Motor neuron (in vitro differentiated cells): ENCODE measurements at regions of chr20 and their contacts with region 1.

Region 1: DNA sequence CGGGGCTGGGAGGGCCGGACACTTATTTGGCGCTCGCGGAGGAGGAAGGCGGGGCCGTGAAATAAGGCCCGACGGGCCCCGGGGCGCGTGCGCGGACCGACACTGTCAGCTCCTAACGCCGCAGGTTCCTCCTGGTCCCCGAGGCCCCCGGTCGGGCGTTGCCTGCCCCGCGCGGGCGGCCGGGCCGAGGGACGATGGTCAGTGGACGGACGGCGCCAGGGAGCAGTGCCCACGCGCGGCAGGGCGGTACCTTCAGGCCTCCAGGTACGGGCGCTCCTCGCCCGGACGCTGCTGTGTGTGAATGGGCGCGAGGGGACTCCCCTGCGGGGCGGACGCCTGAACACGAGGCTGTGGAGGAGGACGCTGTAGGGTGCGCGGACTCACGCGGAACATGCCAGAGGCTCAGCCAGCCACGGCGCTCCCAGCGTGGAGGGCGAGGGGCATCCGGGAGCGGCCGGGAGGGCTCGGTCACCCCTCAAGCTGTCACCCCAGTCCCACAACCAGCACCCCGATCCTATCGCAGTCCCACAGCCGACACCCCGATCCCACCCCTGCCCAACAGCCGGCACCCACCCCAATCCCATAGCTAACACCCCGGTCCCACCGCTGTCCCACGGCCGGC is 339 bp upstream of the GMEB2 start:
- ATAC-seq: peak; percentile 64 to 90 (median 87)
- H3K4me3 ChIP-seq: peak overlapping the region; percentile 81 to 95 (median 89)
- H3K27ac ChIP-seq: peak overlapping the region; percentile 99
- H3K4me1 ChIP-seq: peaks cover 10 to 22% of the 10 kb centered on the region in 2 donors

Region 2: GRCh38 chr20:63434599-63435378 is 192.5 kb before region 1 on chr20:
- in situ Hi-C with region 1: loop called in 1 of 9 experiments (anchors 25 kb)
- ATAC-seq: peak; percentile 18 to 76 (median 44)
- H3K4me3 ChIP-seq: no peak overlapping the region
- H3K27ac ChIP-seq: no peak overlapping the region
- H3K4me1 ChIP-seq: peaks cover 0 to 6% of the 10 kb centered on the region in 2 donors

Region 3: DNA sequence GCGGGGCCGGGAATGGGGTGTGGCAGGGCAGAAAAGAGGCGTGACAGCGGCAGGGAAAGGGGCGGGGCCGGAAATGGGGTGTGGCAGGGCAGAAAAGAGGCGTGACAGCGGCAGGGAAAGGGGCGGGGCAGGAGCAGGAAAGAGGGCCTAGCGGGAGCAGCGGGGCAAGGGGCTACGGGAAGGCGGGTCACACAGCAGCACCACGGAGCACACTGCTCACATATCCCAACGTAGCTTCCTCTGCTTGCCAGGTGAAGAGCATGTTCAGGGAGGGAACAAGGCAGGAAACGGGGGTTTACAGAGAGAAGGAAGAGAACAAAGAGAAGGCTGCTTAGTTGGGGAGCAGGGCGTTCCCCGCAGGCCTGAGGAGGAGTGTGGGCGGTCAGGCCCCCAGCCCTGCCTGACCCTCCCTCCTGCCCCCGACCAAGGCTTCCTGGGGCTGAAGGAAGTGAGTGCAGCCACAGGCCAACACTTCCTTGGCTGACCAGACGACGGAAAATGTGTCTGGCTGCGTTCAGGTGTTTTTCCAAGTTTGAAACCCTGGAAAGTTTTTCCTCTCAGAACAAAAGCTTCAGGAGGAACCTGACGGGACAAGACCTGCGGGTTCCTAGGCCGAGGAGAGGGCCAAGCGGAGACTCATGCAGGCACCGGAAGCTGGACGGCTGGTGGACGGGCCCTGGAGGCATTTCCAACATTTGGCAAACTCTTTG is 315.2 kb after region 1 on chr20:
- in situ Hi-C with region 1: no loop called
- ATAC-seq: peak in 5 of 8 experiments; percentile 26 to 60 (median 54)
- H3K4me3 ChIP-seq: no peak overlapping the region
- H3K27ac ChIP-seq: peak overlapping the region in 1 of 2 donors; percentile 46
- H3K4me1 ChIP-seq: peaks cover 4 to 8% of the 10 kb centered on the region in 2 donors

Region 4: DNA sequence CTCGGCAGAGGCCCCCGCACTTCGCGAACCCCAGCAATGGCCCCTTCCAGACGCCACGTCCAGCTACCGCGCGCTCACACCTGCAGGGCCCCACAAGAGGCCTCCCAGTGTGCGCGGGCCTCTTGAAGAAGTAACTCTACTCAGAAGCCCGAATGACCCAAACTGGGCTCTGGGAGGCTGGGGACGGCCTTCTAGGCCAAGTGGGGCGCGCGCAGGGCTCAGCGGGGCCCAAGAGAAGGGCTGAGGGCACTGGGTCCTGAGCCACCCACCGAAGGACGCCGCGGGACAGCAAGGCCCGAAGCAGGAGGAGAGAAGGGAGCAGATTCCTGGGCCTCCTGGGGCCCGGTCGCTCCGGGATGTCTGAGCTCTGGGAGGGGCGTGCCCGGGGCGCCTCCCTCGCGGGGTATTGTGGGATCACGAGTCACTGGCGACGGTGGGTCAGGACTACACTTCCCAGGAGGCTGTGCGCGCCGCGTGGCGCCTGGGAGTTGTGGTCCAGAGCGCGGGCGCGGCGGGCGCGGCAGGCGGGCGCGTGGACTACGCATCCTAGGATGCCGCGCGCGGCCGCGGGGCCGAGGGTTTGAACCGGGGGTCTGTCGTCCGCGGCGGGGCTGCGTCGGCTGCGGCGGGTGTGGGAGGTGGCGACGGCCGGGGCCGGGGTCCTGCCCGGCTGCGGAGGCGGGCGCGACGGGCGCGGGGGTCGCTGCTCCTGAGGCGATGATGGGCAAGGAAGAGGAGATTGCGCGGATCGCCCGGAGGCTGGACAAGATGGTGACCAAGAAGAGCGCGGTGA is 435.6 kb after region 1 on chr20 and contains the start of gene TCEA2:
- in situ Hi-C with region 1: no loop called
- ATAC-seq: peak; percentile 86 to 96 (median 89)
- H3K4me3 ChIP-seq: peak within 1 kb of the TSS; percentile 68 to 94 (median 90)
- H3K27ac ChIP-seq: peak within 1 kb of the TSS; percentile 64 to 71
- H3K4me1 ChIP-seq: peaks cover 15% of the 10 kb centered on the region in 2 donors
- total RNA-seq, gene TCEA2: 22.4 to 70.3 (median 37.1) TPM